Left colon (tissue), 2 donors: ENCODE measurements at regions of chr15 and their contacts with region 1.

Region 1: DNA sequence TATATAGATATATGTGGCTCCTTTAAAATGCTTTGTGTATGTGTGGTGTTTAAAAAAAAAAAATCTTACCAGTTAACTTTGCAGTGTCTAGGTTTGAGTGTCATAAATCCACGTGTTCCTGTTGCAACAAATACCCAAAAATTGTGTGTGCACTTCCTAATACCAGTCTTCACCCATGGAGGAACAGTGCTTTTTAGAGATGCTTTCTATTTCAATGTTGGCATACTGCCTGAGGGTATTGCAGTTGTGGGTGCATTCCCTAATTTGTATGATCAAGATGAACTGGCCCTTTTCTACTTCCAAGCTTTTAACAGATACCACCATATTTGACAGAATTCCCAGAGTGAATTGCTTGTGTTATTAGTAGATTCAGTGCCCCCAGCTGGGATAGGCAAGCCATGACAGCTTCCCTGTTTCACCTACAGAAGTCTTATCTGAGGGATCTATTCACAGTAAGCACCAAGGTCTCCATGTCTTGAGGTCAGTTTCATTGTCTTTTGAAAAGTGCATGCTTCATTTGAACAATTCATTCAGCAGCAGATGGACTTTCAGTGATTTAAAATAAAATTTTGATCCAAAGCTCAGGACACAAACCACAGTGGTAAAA is 68.9 kb upstream of the GOLGA6B start:
- DNase-seq: no peak
- ATAC-seq: no peak

Region 2: GRCh38 chr15:72312605-72313447 is 272.8 kb before region 1 on chr15:
- intact Hi-C with region 1: loop called in 1 of 2 experiments (anchors 10 kb)
- DNase-seq: peak; percentile 38 to 61
- ATAC-seq: peak; percentile 88

Region 3: GRCh38 chr15:72902245-72902918 is 316.8 kb after region 1 on chr15:
- intact Hi-C with region 1: no loop called
- DNase-seq: peak; percentile 39
- ATAC-seq: peak; percentile 46